Adrenal gland (tissue), 19 donors: ENCODE measurements at regions of chr12 and their contacts with region 1.

Region 1: GRCh38 chr12:10613349-10614055 is at the start of gene MAGOHB:
- DNase-seq: peak; percentile 95 to 99 (median 97)
- H3K4me3 ChIP-seq: peak within 1 kb of the TSS; percentile 79 to 96 (median 88)
- H3K27ac ChIP-seq: peak within 1 kb of the TSS; percentile 67 to 90 (median 82)
- H3K4me1 ChIP-seq: peaks cover 0 to 17% of the 10 kb centered on the region in 2 donors
- H3K27me3 ChIP-seq: no peaks in the 10 kb centered on the region
- CTCF ChIP-seq: peak in 2 of 6 experiments; percentile 2 to 23
- POLR2A ChIP-seq: peak in 1 of 2 donors; percentile 65
- total RNA-seq, gene MAGOHB: 4.4 to 23.3 (median 17.5) TPM

Region 2: GRCh38 chr12:10677651-10678050 is 64.1 kb after region 1 on chr12:
- intact Hi-C with region 1: loop called in 1 of 2 experiments (anchors 5 kb)
- DNase-seq: no peak
- H3K4me3 ChIP-seq: no peak overlapping the region
- H3K27ac ChIP-seq: no peak overlapping the region
- H3K4me1 ChIP-seq: peaks cover 0 to 7% of the 10 kb centered on the region in 2 donors
- H3K27me3 ChIP-seq: peaks cover 12% of the 10 kb centered on the region
- CTCF ChIP-seq: no peak
- POLR2A ChIP-seq: no peak

Region 3: GRCh38 chr12:10721651-10722501 is 108.4 kb after region 1 on chr12:
- intact Hi-C with region 1: loop called in 1 of 2 experiments (anchors 10 kb)
- DNase-seq: peak; percentile 89 to 97 (median 96)
- H3K4me3 ChIP-seq: peak overlapping the region; percentile 86 to 95 (median 90)
- H3K27ac ChIP-seq: peak overlapping the region; percentile 92 to 99 (median 98)
- H3K4me1 ChIP-seq: peaks cover 30 to 55% of the 10 kb centered on the region in 2 donors
- H3K27me3 ChIP-seq: no peaks in the 10 kb centered on the region
- CTCF ChIP-seq: no peak
- POLR2A ChIP-seq: peak in 1 of 2 donors; percentile 51